CD4-positive, alpha-beta T cell (primary cell): ENCODE measurements at regions of chr11 and their contacts with region 1.

Region 1: DNA sequence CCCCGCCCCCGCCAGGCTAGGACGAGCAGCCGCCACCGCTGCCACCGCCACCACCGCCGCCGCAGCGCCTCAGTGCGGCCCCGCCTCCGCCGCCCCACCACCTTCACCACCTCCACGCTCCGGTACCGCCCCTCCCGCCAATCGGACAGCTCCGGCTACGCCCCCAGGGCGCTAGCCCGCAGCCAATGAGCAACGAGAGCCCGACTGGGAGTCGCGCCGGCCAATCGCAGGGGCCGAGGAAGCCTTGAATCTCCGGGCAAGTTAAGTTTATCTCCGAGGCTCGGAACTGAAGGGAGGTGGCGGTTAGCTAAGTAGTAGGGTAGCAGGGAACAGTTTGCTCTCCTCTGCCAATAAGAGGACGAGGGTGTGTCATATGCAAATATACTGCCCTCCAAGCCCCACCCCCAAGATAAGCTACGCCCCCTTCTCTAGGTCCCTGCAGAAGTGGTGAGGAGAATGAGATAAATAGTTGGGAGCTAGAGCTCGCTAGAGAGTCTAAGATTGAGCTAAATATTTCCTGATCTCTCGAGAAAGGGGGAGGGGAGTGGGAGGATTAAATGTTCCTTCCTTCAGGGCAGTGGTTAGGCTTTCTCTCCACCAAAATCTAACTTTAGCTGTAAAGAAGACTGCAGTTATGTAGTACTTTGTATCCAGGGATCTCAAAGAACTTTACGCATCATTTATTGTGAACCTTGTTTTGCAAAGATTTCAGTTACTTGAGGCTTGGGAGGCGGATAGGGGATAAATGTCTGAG is at the start of gene SESN3:
- DNase-seq: peak; percentile 96 to 99 (median 98)
- ATAC-seq: peak; percentile 88
- H3K4me3 ChIP-seq: peak within 1 kb of the TSS; percentile 82
- H3K4me3 Mint-ChIP-seq: peak within 1 kb of the TSS; percentile 98
- H3K27ac ChIP-seq: peak within 1 kb of the TSS; percentile 69 to 82
- H3K27ac Mint-ChIP-seq: peak within 1 kb of the TSS; percentile 89
- H3K4me1 ChIP-seq: peaks cover 16% of the 10 kb centered on the region
- H3K4me1 Mint-ChIP-seq: peaks cover 47% of the 10 kb centered on the region
- H3K27me3 ChIP-seq: no peaks in the 10 kb centered on the region
- H3K27me3 Mint-ChIP-seq: no peaks in the 10 kb centered on the region
- CTCF ChIP-seq: no peak
- total RNA-seq, gene SESN3: 63.9 to 69.1 TPM

Region 2: DNA sequence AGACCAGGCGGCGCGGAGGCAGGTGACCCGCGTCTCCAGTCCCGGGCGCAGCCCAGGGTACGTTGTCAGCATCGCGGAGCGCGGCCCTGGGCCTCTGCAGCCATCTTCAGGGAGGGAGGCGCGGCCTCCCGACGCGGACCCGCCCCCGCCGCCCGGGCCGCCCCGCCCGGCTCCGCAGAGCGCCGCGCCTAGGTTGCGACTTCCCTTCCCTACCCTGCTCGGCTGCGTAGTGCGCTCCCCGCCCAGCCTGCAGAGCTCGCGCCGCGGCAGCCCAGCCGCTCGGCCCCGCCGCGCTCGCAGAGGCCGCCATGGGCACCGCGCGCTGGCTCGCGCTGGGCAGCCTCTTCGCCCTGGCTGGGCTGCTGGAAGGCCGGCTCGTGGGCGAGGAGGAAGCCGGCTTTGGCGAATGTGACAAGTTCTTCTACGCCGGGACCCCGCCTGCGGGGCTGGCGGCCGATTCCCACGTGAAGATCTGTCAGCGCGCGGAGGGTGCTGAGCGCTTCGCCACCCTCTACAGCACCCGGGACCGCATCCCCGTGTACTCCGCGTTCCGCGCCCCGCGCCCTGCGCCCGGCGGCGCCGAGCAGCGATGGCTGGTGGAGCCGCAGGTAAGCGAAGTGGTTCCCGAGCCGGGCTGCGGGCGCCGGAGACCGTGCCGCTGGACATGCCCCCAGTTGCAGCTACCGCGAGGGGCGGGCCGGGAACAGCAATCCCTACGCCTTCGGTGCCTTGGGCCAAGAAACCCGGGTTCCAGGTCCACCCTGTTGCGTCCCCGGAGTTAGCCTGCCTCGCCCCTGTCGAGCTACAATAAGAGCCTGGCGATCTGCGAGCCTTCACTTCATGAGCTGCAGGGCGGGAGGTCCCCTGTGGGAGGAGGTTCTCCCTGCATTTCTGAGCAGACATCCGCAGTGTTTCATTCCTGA is 141.4 kb before region 1 on chr11 and contains the start of gene ENDOD1:
- CTCF ChIA-PET with region 1: interaction called, 3 read pairs
- POLR2A ChIA-PET with region 1: interaction called, 29 read pairs
- intact Hi-C with region 1: loop called in 1 of 2 experiments (anchors 5 kb)
- DNase-seq: peak; percentile 70 to 94 (median 84)
- ATAC-seq: peak; percentile 94
- H3K4me3 ChIP-seq: peak within 1 kb of the TSS; percentile 78
- H3K4me3 Mint-ChIP-seq: peak within 1 kb of the TSS; percentile 92
- H3K27ac ChIP-seq: peak within 1 kb of the TSS; percentile 77 to 84
- H3K27ac Mint-ChIP-seq: peak within 1 kb of the TSS; percentile 95
- H3K4me1 ChIP-seq: peaks cover 34% of the 10 kb centered on the region
- H3K4me1 Mint-ChIP-seq: peaks cover 50% of the 10 kb centered on the region
- H3K27me3 ChIP-seq: no peaks in the 10 kb centered on the region
- H3K27me3 Mint-ChIP-seq: no peaks in the 10 kb centered on the region
- CTCF ChIP-seq: no peak
- total RNA-seq, gene ENDOD1: 3.8 to 4.4 TPM

Region 3: GRCh38 chr11:95193541-95193940 is 37.8 kb before region 1 on chr11:
- CTCF ChIA-PET with region 1: interaction called, 3 read pairs
- POLR2A ChIA-PET with region 1: interaction called, 3 read pairs
- intact Hi-C with region 1: loop called (anchors 5 kb)
- DNase-seq: no peak
- ATAC-seq: no peak
- H3K4me3 ChIP-seq: no peak overlapping the region
- H3K4me3 Mint-ChIP-seq: no peak overlapping the region
- H3K27ac ChIP-seq: no peak overlapping the region
- H3K27ac Mint-ChIP-seq: no peak overlapping the region
- H3K4me1 ChIP-seq: no peaks in the 10 kb centered on the region
- H3K4me1 Mint-ChIP-seq: peaks cover 43% of the 10 kb centered on the region
- H3K27me3 ChIP-seq: no peaks in the 10 kb centered on the region
- H3K27me3 Mint-ChIP-seq: no peaks in the 10 kb centered on the region
- CTCF ChIP-seq: no peak

Region 4: DNA sequence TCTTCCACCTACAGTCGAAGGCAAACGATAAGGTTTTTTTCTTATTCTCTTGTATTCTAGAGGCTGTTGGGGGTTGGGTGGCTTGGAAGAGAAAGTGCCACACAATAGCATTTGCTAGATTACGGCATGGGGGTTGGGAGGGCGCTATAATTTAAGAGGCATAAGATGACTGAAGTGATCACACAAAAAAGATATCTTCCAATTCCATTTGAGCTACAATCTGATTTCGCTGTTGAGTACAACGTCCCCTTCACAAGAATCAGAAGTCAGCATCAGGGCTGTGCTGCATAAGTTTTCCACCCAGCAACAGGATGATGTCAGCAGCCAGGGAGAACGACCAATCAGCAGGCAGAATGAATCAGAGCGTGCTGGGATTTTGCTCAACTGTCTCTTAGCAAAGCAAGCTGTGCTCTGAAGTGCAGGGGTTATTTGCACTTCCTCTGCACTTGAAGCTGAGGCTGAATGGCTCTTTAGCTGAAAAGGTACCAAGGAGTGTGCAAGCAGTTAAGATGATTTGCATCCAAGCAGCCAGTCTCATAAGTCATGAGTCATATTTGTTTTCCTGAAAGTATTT is 22.9 kb after region 1 on chr11:
- CTCF ChIA-PET with region 1: interaction called, 13 read pairs
- POLR2A ChIA-PET with region 1: interaction called, 158 read pairs
- intact Hi-C with region 1: loop called (anchors 1 to 2 kb)
- DNase-seq: peak; percentile 64 to 93 (median 74)
- ATAC-seq: peak; percentile 98
- H3K4me3 ChIP-seq: peak overlapping the region; percentile 53
- H3K4me3 Mint-ChIP-seq: peak overlapping the region; percentile 92
- H3K27ac ChIP-seq: peak overlapping the region; percentile 53 to 58
- H3K27ac Mint-ChIP-seq: peak overlapping the region; percentile 92
- H3K4me1 ChIP-seq: peaks cover 31% of the 10 kb centered on the region
- H3K4me1 Mint-ChIP-seq: peaks cover 55% of the 10 kb centered on the region
- H3K27me3 ChIP-seq: no peaks in the 10 kb centered on the region
- H3K27me3 Mint-ChIP-seq: no peaks in the 10 kb centered on the region
- CTCF ChIP-seq: no peak

Region 5: DNA sequence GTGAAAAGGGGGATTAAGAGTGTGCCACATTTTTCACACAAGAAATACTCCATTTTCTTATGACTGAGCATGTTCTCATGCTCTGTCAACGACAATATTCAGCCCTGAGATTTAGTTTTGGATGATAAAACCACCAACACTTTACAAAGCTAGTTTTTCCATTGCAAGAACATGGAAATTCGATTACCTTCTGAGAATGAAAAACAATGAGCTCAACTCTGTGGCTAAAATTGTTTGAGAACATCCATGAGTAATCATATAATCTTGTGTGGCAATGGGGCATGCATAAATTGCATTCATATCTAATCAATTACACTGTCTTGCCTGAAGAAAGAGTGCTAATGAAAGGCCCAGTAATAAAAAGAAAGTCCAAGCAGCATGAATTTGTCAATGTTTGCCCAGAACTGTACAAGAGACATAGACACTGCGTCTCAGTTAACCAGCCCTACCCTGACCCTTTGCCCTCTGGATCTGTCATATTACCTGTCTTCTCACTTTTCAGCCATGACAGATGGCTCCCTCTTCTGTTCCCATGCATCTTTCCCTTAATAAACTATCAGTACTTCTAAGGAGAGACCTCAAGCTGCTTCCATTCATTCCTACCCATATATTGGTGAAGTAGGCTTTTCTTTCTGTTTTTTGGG is 304.9 kb after region 1 on chr11:
- CTCF ChIA-PET with region 1: no interaction called
- POLR2A ChIA-PET with region 1: no interaction called
- intact Hi-C with region 1: no loop called
- DNase-seq: no peak
- ATAC-seq: no peak
- H3K4me3 ChIP-seq: no peak overlapping the region
- H3K4me3 Mint-ChIP-seq: no peak overlapping the region
- H3K27ac ChIP-seq: no peak overlapping the region
- H3K27ac Mint-ChIP-seq: no peak overlapping the region
- H3K4me1 ChIP-seq: no peaks in the 10 kb centered on the region
- H3K4me1 Mint-ChIP-seq: no peaks in the 10 kb centered on the region
- H3K27me3 ChIP-seq: no peaks in the 10 kb centered on the region
- H3K27me3 Mint-ChIP-seq: no peaks in the 10 kb centered on the region
- CTCF ChIP-seq: no peak

Region 6: DNA sequence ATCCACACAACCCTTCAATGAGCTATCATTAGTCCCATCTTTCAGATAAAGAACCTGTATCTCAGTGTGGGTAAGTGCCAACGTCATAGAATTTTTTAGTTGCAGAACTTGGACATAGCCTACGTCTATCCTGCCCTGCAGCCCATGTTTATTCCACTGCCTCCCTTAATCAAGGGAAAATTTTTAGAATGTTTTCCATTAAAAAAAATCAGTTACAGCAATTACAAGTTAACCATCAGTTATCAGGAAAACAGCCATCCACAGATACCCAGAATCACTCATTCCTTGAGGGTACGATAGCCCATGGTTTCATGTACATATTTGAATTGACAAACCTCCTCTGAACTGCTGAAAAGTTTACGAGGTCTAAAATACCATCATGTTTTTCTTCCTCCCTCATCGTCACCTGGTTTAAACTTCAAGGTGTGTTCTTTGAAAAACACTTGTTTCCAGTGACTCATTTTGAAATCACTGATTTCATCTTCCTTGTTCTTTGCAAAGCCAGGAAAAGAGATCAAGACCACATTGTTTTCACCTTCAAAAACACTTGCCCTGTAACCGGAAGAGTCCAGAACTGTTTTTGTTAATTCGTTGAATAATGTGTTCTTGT is 457.4 kb after region 1 on chr11:
- CTCF ChIA-PET with region 1: no interaction called
- POLR2A ChIA-PET with region 1: interaction called, 21 read pairs
- intact Hi-C with region 1: no loop called
- DNase-seq: peak in 3 of 14 experiments; percentile 61 to 81 (median 68)
- ATAC-seq: peak; percentile 78
- H3K4me3 ChIP-seq: no peak overlapping the region
- H3K4me3 Mint-ChIP-seq: no peak overlapping the region
- H3K27ac ChIP-seq: peak overlapping the region; percentile 57 to 60
- H3K27ac Mint-ChIP-seq: no peak overlapping the region
- H3K4me1 ChIP-seq: peaks cover 19% of the 10 kb centered on the region
- H3K4me1 Mint-ChIP-seq: peaks cover 27% of the 10 kb centered on the region
- H3K27me3 ChIP-seq: no peaks in the 10 kb centered on the region
- H3K27me3 Mint-ChIP-seq: no peaks in the 10 kb centered on the region
- CTCF ChIP-seq: no peak

Region 7: GRCh38 chr11:95790123-95790932 is 559.0 kb after region 1 on chr11 and contains the start of gene CEP57:
- CTCF ChIA-PET with region 1: interaction called, 6 read pairs
- POLR2A ChIA-PET with region 1: interaction called, 90 read pairs
- intact Hi-C with region 1: loop called (anchors 5 kb)
- DNase-seq: peak; percentile 87 to 97 (median 90)
- ATAC-seq: peak; percentile 54
- H3K4me3 ChIP-seq: peak within 1 kb of the TSS; percentile 93
- H3K4me3 Mint-ChIP-seq: peak within 1 kb of the TSS; percentile 96
- H3K27ac ChIP-seq: peak within 1 kb of the TSS; percentile 99 to 100
- H3K27ac Mint-ChIP-seq: peak within 1 kb of the TSS; percentile 100
- H3K4me1 ChIP-seq: peaks cover 24% of the 10 kb centered on the region
- H3K4me1 Mint-ChIP-seq: peaks cover 61% of the 10 kb centered on the region
- H3K27me3 ChIP-seq: no peaks in the 10 kb centered on the region
- H3K27me3 Mint-ChIP-seq: no peaks in the 10 kb centered on the region
- CTCF ChIP-seq: no peak
- total RNA-seq, gene CEP57: 43.5 to 46.6 TPM